ENCODE measurements at regions of chr10 and their contacts with region 1.

Region 1: GRCh38 chr10:72126184-72126871 is 38.0 kb upstream of the SPOCK2 start:
- DNase-seq: no peak
- ATAC-seq: no peak
- H3K4me3 ChIP-seq: no peak overlapping the region
- H3K27ac ChIP-seq: no peak overlapping the region
- H3K4me1 ChIP-seq: peaks cover 0 to 15% (median 4%) of the 10 kb centered on the region in 12 donors
- H3K27me3 ChIP-seq: no peaks in the 10 kb centered on the region
- CTCF ChIP-seq: peak in 10 of 12 donors; percentile 16 to 56 (median 34)
- POLR2A ChIP-seq: no peak

Region 2: GRCh38 chr10:72088889-72089575 is 37.3 kb before region 1 on chr10:
- intact Hi-C with region 1: no loop called
- DNase-seq: peak in 1 of 5 donors; percentile 62
- ATAC-seq: peak in 3 of 4 donors; percentile 27 to 53 (median 40)
- H3K4me3 ChIP-seq: peak overlapping the region in 10 of 12 donors; percentile 52 to 71 (median 60)
- H3K27ac ChIP-seq: peak overlapping the region in 10 of 12 donors; percentile 10 to 86 (median 65)
- H3K4me1 ChIP-seq: peaks cover 0 to 36% (median 20%) of the 10 kb centered on the region in 12 donors
- H3K27me3 ChIP-seq: peaks cover 0 to 35% (median 13%) of the 10 kb centered on the region in 9 donors
- CTCF ChIP-seq: no peak
- POLR2A ChIP-seq: no peak

Region 3: DNA sequence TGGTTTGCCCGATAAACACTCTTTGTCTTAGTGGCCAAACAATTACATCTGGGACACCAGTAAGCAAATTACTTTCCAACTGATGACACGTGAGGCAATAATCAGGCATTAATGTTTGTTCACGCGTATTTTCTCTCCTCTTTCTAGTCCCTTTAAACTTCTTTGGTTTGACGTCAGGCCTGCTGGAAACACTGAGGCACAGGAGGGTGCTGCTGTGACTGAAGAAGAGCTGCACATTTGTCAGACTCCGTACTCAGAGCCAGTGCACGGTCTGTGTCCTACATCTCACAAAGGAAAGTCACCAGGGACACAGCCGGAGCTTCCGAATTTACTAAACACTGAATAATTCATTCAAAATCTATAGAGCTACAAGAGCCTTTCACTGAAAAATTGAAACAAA is 31.8 kb after region 1 on chr10:
- intact Hi-C with region 1: no loop called
- DNase-seq: no peak
- ATAC-seq: no peak
- H3K4me3 ChIP-seq: no peak overlapping the region
- H3K27ac ChIP-seq: no peak overlapping the region
- H3K4me1 ChIP-seq: peaks cover 0 to 8% (median 0%) of the 10 kb centered on the region in 12 donors
- H3K27me3 ChIP-seq: no peaks in the 10 kb centered on the region
- CTCF ChIP-seq: no peak
- POLR2A ChIP-seq: no peak

Region 4: DNA sequence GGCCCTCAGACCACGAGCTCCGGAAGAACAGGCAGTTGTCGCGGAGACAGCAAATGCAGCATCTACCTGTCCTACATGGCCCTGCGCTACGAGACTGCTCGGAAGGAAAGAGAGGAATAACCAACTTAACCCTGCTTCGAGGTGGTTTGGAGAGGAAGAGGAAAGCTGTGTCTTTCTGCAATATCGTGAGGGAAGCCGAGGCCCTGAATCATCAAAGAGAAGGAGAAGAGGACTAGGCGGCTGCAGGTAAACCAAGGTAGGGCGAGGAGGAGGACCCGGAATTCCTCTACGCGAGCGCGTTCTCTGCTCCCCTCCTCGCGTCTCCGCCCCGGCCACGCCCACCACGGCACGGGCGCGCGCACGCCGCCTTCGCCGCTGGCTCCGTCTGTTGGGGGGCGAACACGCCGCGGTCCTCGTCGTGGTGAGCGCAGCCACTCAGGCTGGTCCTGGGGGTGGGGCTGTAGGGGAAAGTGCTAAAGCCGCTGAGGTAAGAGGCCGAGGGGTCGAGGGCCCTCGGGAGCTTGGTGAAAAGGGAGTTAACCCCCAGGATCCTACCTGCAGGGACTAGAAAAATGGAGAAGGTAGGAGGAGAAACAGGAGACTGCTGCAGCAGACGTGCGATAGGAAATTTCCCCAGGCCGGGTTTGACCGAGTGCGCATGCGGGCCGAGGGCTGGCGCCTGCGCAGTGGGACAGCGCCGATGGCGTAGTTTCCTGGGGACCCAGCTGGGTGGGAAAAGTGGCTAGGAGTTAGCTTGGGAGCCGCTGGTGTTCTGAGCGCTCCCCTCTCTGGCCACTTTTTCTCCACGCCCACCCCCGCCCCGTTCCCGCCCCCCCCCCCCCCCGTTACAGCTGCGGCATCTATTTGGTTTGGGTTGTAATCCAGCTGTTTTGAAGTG is 89.6 kb after region 1 on chr10 and contains the starts of genes ANAPC16 and ASCC1:
- intact Hi-C with region 1: loop called in 8 of 10 experiments (anchors 5 to 10 kb)
- DNase-seq: peak; percentile 91 to 96 (median 93)
- ATAC-seq: peak; percentile 92 to 99 (median 98)
- H3K4me3 ChIP-seq: peak within 1 kb of the TSS; percentile 62 to 91 (median 72)
- H3K27ac ChIP-seq: peak within 1 kb of the TSS; percentile 91 to 100 (median 98)
- H3K4me1 ChIP-seq: peaks cover 9 to 54% (median 38%) of the 10 kb centered on the region in 12 donors
- H3K27me3 ChIP-seq: no peaks in the 10 kb centered on the region
- CTCF ChIP-seq: peak in 1 of 12 donors; percentile 5
- POLR2A ChIP-seq: peak; percentile 41 to 92
- total RNA-seq, gene ANAPC16: 135 to 237 (median 179) TPM
- total RNA-seq, gene ASCC1: 26.4 to 44.8 (median 35.3) TPM

Region 5: GRCh38 chr10:72229261-72230251 is 103.2 kb after region 1 on chr10:
- intact Hi-C with region 1: loop called in 2 of 10 experiments (anchors 5 kb)
- DNase-seq: no peak
- ATAC-seq: peak in 3 of 4 donors; percentile 28 to 57 (median 56)
- H3K4me3 ChIP-seq: no peak overlapping the region
- H3K27ac ChIP-seq: peak overlapping the region in 8 of 12 donors; percentile 12 to 77 (median 52)
- H3K4me1 ChIP-seq: peaks cover 0 to 42% (median 11%) of the 10 kb centered on the region in 12 donors
- H3K27me3 ChIP-seq: no peaks in the 10 kb centered on the region
- CTCF ChIP-seq: no peak
- POLR2A ChIP-seq: no peak